OCI-LY7 (cell line): ENCODE measurements at regions of chr3 and their contacts with region 1.

Region 1: GRCh38 chr3:195522254-195523023 is 20.7 kb downstream of the PPP1R2 start:
- DNase-seq: peak; percentile 60
- H3K4me3 ChIP-seq: no peak overlapping the region
- H3K27ac ChIP-seq: peak overlapping the region; percentile 24
- H3K4me1 ChIP-seq: peaks cover 15% of the 10 kb centered on the region
- CTCF ChIP-seq: peak; percentile 99

Region 2: DNA sequence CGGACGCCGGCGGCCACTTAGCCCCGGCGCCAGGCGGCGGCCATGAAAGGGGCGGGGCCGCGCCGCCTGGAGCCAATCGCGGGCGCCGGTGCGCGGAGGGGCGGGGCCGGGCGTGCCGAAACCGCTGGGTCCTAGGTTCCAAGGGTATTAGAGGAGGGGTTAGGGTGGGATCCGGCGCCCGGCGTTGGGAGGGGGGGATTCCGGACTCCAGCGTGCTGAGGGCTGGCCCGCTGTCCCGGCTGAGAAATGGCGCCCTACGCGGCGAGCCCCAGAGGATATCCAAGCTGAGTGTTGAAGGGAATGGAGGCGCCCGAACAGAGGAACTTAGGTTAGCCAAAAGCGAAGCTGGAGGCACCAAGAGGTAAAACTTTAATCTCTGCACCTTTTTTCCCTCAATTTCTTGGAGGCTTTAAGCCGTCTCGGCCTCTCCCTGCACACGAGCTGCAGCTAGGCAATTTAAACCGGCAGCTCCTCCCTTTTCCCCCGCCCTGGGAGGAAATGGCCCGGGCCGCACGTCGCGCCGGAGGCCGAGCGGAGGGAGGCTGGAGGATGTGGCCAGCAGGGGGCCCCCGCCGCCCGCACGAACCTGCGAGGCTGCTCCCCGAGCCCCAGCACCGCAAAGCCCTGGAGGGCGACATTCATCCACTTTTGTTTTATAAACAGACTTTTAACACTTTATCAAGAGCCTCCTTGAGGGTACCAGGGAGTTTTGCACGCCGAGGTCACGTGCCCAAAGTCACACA is 251.2 kb before region 1 on chr3 and contains the start of gene XXYLT1:
- CTCF ChIA-PET with region 1: interaction called, 13 read pairs
- POLR2A ChIA-PET with region 1: interaction called, 6 read pairs
- intact Hi-C with region 1: loop called (anchors 1 kb)
- DNase-seq: peak; percentile 93
- H3K4me3 ChIP-seq: peak within 1 kb of the TSS; percentile 79
- H3K27ac ChIP-seq: peak within 1 kb of the TSS; percentile 77
- H3K4me1 ChIP-seq: peaks cover 24% of the 10 kb centered on the region
- CTCF ChIP-seq: peak; percentile 99
- total RNA-seq, gene XXYLT1: 16.2 and 19.6 TPM in 2 replicates

Region 3: GRCh38 chr3:195542698-195543499 is 20.5 kb after region 1 on chr3 and contains the start of gene PPP1R2:
- CTCF ChIA-PET with region 1: interaction called, 3 read pairs
- POLR2A ChIA-PET with region 1: interaction called, 11 read pairs
- intact Hi-C with region 1: no loop called
- DNase-seq: peak; percentile 95
- H3K4me3 ChIP-seq: peak within 1 kb of the TSS; percentile 89
- H3K27ac ChIP-seq: peak within 1 kb of the TSS; percentile 89
- H3K4me1 ChIP-seq: peaks cover 59% of the 10 kb centered on the region
- CTCF ChIP-seq: no peak
- total RNA-seq, gene PPP1R2: 239 and 294 TPM in 2 replicates

Region 4: GRCh38 chr3:195580744-195581443 is 58.5 kb after region 1 on chr3:
- CTCF ChIA-PET with region 1: no interaction called
- POLR2A ChIA-PET with region 1: no interaction called
- intact Hi-C with region 1: no loop called
- DNase-seq: no peak
- H3K4me3 ChIP-seq: no peak overlapping the region
- H3K27ac ChIP-seq: no peak overlapping the region
- H3K4me1 ChIP-seq: peaks cover 3% of the 10 kb centered on the region
- CTCF ChIP-seq: no peak